T-cell (primary cell): ENCODE measurements at regions of chr13 and their contacts with region 1.

Region 1: GRCh38 chr13:76980075-76980718 is 11.7 kb upstream of the CLN5 start:
- DNase-seq: peak; percentile 55 to 91 (median 80)
- ATAC-seq: peak; percentile 99 to 100 (median 100)
- H3K4me3 ChIP-seq: peak overlapping the region in 1 of 2 donors; percentile 44
- H3K4me3 Mint-ChIP-seq: peak overlapping the region in 2 of 3 donors; percentile 40 to 57
- H3K27ac ChIP-seq: no peak overlapping the region
- H3K27ac Mint-ChIP-seq: no peak overlapping the region
- H3K4me1 ChIP-seq: peaks cover 0 to 17% of the 10 kb centered on the region in 2 experiments
- H3K4me1 Mint-ChIP-seq: peaks cover 12 to 14% (median 12%) of the 10 kb centered on the region in 3 donors
- H3K27me3 ChIP-seq: peaks cover 2 to 40% of the 10 kb centered on the region in 2 experiments
- H3K27me3 Mint-ChIP-seq: peaks cover 12 to 39% of the 10 kb centered on the region in 2 donors

Region 2: DNA sequence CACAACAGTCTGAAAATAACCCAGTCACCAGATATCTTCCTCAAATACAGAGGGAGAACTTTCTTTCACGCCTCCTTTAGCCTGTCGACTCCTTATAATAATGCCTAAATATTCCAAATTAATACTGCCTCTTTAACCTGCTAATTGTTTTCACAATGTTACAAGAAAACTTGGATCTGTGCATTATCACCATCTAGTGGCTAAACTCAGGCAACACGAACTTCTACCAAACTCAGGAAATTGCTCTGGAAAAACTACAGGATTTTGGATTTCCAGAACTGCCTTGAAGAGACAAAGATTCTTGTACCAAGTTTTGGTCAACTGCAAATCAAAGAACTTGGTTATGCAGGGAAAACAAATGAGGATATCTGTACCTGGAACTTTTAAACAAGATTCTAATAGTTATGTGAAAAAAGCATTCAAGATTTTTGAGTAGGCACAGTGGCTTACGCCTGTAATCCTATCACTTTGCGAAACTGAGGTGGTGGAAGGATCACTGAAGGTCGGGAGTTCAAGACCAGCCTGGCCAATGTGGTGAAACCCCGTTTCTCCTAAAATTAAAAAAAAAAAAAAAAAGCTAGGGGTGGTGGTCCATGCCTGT is 22.5 kb after region 1 on chr13:
- CTCF ChIA-PET with region 1: interaction called, 6 to 13 read pairs
- POLR2A ChIA-PET with region 1: interaction called in 1 of 2 experiments, 4 read pairs
- DNase-seq: peak in 1 of 35 experiments; percentile 47
- ATAC-seq: no peak
- H3K4me3 ChIP-seq: no peak overlapping the region
- H3K4me3 Mint-ChIP-seq: peak overlapping the region in 1 of 3 donors; percentile 22
- H3K27ac ChIP-seq: no peak overlapping the region
- H3K27ac Mint-ChIP-seq: peak overlapping the region; percentile 16 to 82
- H3K4me1 ChIP-seq: no peaks in the 10 kb centered on the region
- H3K4me1 Mint-ChIP-seq: peaks cover 33 to 52% (median 46%) of the 10 kb centered on the region in 3 donors
- H3K27me3 ChIP-seq: no peaks in the 10 kb centered on the region
- H3K27me3 Mint-ChIP-seq: no peaks in the 10 kb centered on the region